Caco-2 (cell line): ENCODE measurements at regions of chr12 and their contacts with region 1.

Region 1: DNA sequence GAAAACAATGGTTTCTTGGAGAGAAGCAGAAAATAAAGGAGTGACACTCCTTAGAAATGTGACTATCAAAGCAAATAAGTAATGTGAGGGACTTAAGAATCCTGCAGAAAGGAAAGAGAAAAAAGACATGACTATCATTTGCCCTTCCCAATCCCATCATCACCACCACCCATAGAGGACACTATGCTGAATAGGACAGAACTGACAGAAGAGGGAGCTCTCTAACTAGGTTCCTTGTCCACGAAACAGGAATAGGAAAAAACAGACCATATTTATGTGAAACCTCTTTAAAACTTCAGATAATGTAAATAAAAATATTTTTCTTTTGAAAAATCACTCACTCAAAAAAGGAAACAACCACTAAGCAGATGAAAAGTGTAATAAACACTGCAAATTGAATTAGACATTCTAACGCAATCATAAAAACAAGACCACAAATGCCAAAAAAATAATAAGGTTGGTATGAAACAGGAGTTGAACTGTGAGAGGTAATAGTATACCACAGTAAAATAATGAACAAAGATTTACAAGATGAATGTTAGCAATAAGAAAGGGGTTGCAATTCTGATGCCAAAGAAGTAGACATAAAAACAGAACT is 24.1 kb downstream of the KLRD1 start:
- DNase-seq: peak in 1 of 2 experiments; percentile 65
- H3K4me3 ChIP-seq: no peak overlapping the region
- H3K4me3 Mint-ChIP-seq: no peak overlapping the region
- H3K27ac Mint-ChIP-seq: no peak overlapping the region
- H3K4me1 ChIP-seq: no peaks in the 10 kb centered on the region
- H3K4me1 Mint-ChIP-seq: peaks cover 24% of the 10 kb centered on the region
- H3K27me3 ChIP-seq: no peaks in the 10 kb centered on the region
- H3K27me3 Mint-ChIP-seq: no peaks in the 10 kb centered on the region
- CTCF ChIP-seq: peak; percentile 92 to 96

Region 2: GRCh38 chr12:10235761-10236631 is 95.7 kb before region 1 on chr12:
- CTCF ChIA-PET with region 1: no interaction called
- POLR2A ChIA-PET with region 1: no interaction called
- intact Hi-C with region 1: loop called (anchors 2 kb)
- DNase-seq: peak in 1 of 2 experiments; percentile 43
- H3K4me3 ChIP-seq: no peak overlapping the region
- H3K4me3 Mint-ChIP-seq: no peak overlapping the region
- H3K27ac Mint-ChIP-seq: no peak overlapping the region
- H3K4me1 ChIP-seq: no peaks in the 10 kb centered on the region
- H3K4me1 Mint-ChIP-seq: no peaks in the 10 kb centered on the region
- H3K27me3 ChIP-seq: no peaks in the 10 kb centered on the region
- H3K27me3 Mint-ChIP-seq: peaks cover 4% of the 10 kb centered on the region
- CTCF ChIP-seq: peak; percentile 81 to 87

Region 3: DNA sequence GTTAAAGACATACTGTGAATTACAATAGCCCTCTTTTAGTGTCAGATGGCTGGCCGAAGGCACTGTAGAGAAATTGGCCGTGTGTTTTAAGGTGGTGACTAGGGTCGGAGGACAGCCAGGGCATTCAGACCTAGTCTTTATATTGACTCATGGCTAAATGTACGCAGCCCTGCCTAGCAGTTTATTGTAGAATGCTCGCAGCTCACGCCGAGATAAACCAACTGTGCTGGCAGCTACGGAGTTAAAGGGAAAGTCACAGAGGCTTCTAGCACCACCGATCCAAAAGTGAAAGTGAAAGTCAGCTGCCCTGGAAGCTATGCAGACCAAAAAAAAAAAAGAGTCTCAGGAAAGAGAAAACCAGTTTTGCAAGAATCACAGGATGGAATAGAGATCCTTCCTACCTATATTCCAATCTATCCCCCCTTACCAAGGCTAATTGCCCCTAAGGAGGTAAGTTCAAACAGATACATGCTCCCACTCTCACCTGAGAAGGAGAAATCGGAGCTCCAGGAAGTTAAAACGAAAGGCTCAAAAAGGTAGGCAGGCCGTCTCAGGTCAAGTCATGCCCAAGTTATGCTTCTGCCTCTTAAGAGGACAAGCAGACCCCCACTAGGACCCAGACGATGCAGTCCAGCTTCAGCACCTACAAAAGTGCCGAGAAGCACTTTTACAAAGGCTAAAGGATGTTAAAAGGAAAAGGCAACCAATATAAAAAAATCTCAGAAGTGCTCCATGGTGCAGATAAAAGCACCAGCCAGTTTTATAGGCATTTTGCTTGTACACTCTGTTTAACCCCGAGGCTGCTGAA is 33.3 kb after region 1 on chr12:
- CTCF ChIA-PET with region 1: interaction called, 4 read pairs
- POLR2A ChIA-PET with region 1: no interaction called
- intact Hi-C with region 1: loop called (anchors 1 kb)
- DNase-seq: peak; percentile 84 to 88
- H3K4me3 ChIP-seq: peak overlapping the region; percentile 39
- H3K4me3 Mint-ChIP-seq: no peak overlapping the region
- H3K27ac Mint-ChIP-seq: no peak overlapping the region
- H3K4me1 ChIP-seq: peaks cover 57% of the 10 kb centered on the region
- H3K4me1 Mint-ChIP-seq: peaks cover 14% of the 10 kb centered on the region
- H3K27me3 ChIP-seq: no peaks in the 10 kb centered on the region
- H3K27me3 Mint-ChIP-seq: no peaks in the 10 kb centered on the region
- CTCF ChIP-seq: no peak

Region 4: GRCh38 chr12:10385166-10385613 is 53.4 kb after region 1 on chr12:
- CTCF ChIA-PET with region 1: interaction called, 12 read pairs
- POLR2A ChIA-PET with region 1: no interaction called
- intact Hi-C with region 1: no loop called
- DNase-seq: peak in 1 of 2 experiments; percentile 53
- H3K4me3 ChIP-seq: no peak overlapping the region
- H3K4me3 Mint-ChIP-seq: peak overlapping the region; percentile 0
- H3K27ac Mint-ChIP-seq: peak overlapping the region; percentile 8
- H3K4me1 ChIP-seq: peaks cover 8% of the 10 kb centered on the region; the same call in 1 of the 2 replicates
- H3K4me1 Mint-ChIP-seq: peaks cover 28% of the 10 kb centered on the region
- H3K27me3 ChIP-seq: no peaks in the 10 kb centered on the region
- H3K27me3 Mint-ChIP-seq: no peaks in the 10 kb centered on the region
- CTCF ChIP-seq: no peak

Region 5: GRCh38 chr12:10409387-10409786 is 77.6 kb after region 1 on chr12 and contains the start of gene KLRC4:
- CTCF ChIA-PET with region 1: no interaction called
- POLR2A ChIA-PET with region 1: no interaction called
- intact Hi-C with region 1: loop called (anchors 1 kb)
- DNase-seq: no peak
- H3K4me3 ChIP-seq: no peak within 1 kb of the TSS
- H3K4me3 Mint-ChIP-seq: no peak within 1 kb of the TSS
- H3K27ac Mint-ChIP-seq: no peak within 1 kb of the TSS
- H3K4me1 ChIP-seq: no peaks in the 10 kb centered on the region
- H3K4me1 Mint-ChIP-seq: peaks cover 5% of the 10 kb centered on the region
- H3K27me3 ChIP-seq: no peaks in the 10 kb centered on the region
- H3K27me3 Mint-ChIP-seq: no peaks in the 10 kb centered on the region
- CTCF ChIP-seq: no peak
- total RNA-seq, gene KLRC4: not detected in 2 replicates

Region 6: GRCh38 chr12:10501031-10501430 is 169.3 kb after region 1 on chr12:
- CTCF ChIA-PET with region 1: no interaction called
- POLR2A ChIA-PET with region 1: no interaction called
- intact Hi-C with region 1: loop called (anchors 1 kb)
- DNase-seq: no peak
- H3K4me3 ChIP-seq: no peak overlapping the region
- H3K4me3 Mint-ChIP-seq: no peak overlapping the region
- H3K27ac Mint-ChIP-seq: no peak overlapping the region
- H3K4me1 ChIP-seq: no peaks in the 10 kb centered on the region
- H3K4me1 Mint-ChIP-seq: no peaks in the 10 kb centered on the region
- H3K27me3 ChIP-seq: no peaks in the 10 kb centered on the region
- H3K27me3 Mint-ChIP-seq: peaks cover 17% of the 10 kb centered on the region
- CTCF ChIP-seq: peak; percentile 34 to 38

Region 7: DNA sequence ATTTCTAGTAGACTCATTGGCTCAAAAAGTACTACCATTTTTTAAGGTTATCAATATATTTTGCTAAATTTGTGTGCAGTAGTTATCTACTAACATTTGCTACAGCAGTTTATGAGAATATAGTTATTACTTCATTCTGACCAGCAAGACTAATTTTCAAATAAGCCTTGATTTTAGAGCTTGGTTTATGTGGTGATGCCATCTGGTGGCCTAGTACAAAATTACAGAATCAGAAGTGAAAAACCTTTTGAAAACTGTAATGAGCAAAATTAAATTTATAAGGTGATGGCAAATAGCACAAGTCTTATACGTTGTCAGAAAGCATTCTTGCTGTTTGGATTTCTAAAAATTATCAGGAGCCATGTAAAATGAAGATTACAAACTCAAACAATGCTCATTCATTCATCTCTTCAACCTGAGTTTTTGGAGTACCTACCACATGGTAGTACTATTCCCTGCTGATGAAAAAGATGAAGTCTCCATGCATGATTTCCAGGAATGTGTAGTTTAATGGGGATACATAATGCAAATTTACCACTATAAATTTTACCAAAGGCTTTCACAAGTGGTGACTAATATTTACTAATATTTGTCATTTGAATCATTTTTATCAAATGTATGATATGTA is 230.7 kb after region 1 on chr12:
- CTCF ChIA-PET with region 1: interaction called, 8 read pairs
- POLR2A ChIA-PET with region 1: no interaction called
- intact Hi-C with region 1: loop called (anchors 1 kb)
- DNase-seq: peak in 1 of 2 experiments; percentile 49
- H3K4me3 ChIP-seq: no peak overlapping the region
- H3K4me3 Mint-ChIP-seq: no peak overlapping the region
- H3K27ac Mint-ChIP-seq: no peak overlapping the region
- H3K4me1 ChIP-seq: no peaks in the 10 kb centered on the region
- H3K4me1 Mint-ChIP-seq: no peaks in the 10 kb centered on the region
- H3K27me3 ChIP-seq: no peaks in the 10 kb centered on the region
- H3K27me3 Mint-ChIP-seq: peaks cover 9% of the 10 kb centered on the region
- CTCF ChIP-seq: peak; percentile 67 to 83